ENCODE measurements at regions of chr2 and their contacts with region 1.

Region 1: GRCh38 chr2:102082571-102083392 is 59.8 kb upstream of the IL1R1 start:
- DNase-seq: peak; percentile 81
- H3K4me3 Mint-ChIP-seq: peak overlapping the region; percentile 65
- H3K27ac Mint-ChIP-seq: peak overlapping the region; percentile 90
- H3K4me1 Mint-ChIP-seq: peaks cover 31% of the 10 kb centered on the region
- H3K27me3 Mint-ChIP-seq: peaks cover 10% of the 10 kb centered on the region

Region 2: GRCh38 chr2:101998896-101999789 is 83.6 kb before region 1 on chr2:
- intact Hi-C with region 1: loop called (anchors 5 kb)
- DNase-seq: no peak
- H3K4me3 Mint-ChIP-seq: no peak overlapping the region
- H3K27ac Mint-ChIP-seq: peak overlapping the region; percentile 79
- H3K4me1 Mint-ChIP-seq: peaks cover 25% of the 10 kb centered on the region
- H3K27me3 Mint-ChIP-seq: peaks cover 3% of the 10 kb centered on the region

Region 3: GRCh38 chr2:102063941-102064678 is 18.7 kb before region 1 on chr2:
- intact Hi-C with region 1: loop called (anchors 1 kb)
- DNase-seq: peak; percentile 67
- H3K4me3 Mint-ChIP-seq: no peak overlapping the region
- H3K27ac Mint-ChIP-seq: no peak overlapping the region
- H3K4me1 Mint-ChIP-seq: peaks cover 19% of the 10 kb centered on the region
- H3K27me3 Mint-ChIP-seq: peaks cover 10% of the 10 kb centered on the region

Region 4: GRCh38 chr2:102103992-102104871 is 21.4 kb after region 1 on chr2:
- intact Hi-C with region 1: loop called (anchors 2 kb)
- DNase-seq: peak; percentile 76
- H3K4me3 Mint-ChIP-seq: peak overlapping the region; percentile 79
- H3K27ac Mint-ChIP-seq: peak overlapping the region; percentile 14
- H3K4me1 Mint-ChIP-seq: peaks cover 22% of the 10 kb centered on the region
- H3K27me3 Mint-ChIP-seq: peaks cover 35% of the 10 kb centered on the region

Region 5: GRCh38 chr2:102138331-102138730 is 55.5 kb after region 1 on chr2:
- intact Hi-C with region 1: loop called (anchors 2 kb)
- DNase-seq: no peak
- H3K4me3 Mint-ChIP-seq: no peak overlapping the region
- H3K27ac Mint-ChIP-seq: peak overlapping the region; percentile 1
- H3K4me1 Mint-ChIP-seq: peaks cover 24% of the 10 kb centered on the region
- H3K27me3 Mint-ChIP-seq: peaks cover 31% of the 10 kb centered on the region

Region 6: GRCh38 chr2:102366406-102367112 is 283.8 kb after region 1 on chr2:
- intact Hi-C with region 1: loop called (anchors 5 kb)
- DNase-seq: peak; percentile 64
- H3K4me3 Mint-ChIP-seq: peak overlapping the region; percentile 73
- H3K27ac Mint-ChIP-seq: peak overlapping the region; percentile 91
- H3K4me1 Mint-ChIP-seq: peaks cover 77% of the 10 kb centered on the region
- H3K27me3 Mint-ChIP-seq: no peaks in the 10 kb centered on the region

Region 7: DNA sequence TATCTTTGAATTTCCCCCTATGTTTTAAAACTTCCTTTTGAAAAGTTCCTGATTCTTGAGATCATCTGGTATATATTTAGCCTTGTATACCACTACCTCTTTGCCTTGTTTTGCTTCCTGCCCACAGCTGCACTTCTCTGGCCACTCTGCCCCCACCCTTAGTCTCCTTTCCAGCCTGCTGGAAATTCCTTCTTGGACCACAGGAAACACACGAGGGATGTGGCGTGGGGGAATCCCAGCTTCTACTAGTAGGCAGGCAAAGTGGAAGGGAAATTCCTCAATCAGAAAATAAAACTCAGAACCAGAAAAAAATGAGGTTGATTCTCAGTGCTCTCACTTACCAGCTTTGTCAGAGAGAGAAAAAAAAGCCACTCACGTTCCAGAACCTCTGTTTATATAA is 353.5 kb after region 1 on chr2:
- intact Hi-C with region 1: loop called (anchors 5 kb)
- DNase-seq: no peak
- H3K4me3 Mint-ChIP-seq: peak overlapping the region; percentile 43
- H3K27ac Mint-ChIP-seq: peak overlapping the region; percentile 87
- H3K4me1 Mint-ChIP-seq: peaks cover 33% of the 10 kb centered on the region
- H3K27me3 Mint-ChIP-seq: no peaks in the 10 kb centered on the region